Lower leg skin (tissue), 4 donors: ENCODE measurements at regions of chr4 and their contacts with region 1.

Region 1: DNA sequence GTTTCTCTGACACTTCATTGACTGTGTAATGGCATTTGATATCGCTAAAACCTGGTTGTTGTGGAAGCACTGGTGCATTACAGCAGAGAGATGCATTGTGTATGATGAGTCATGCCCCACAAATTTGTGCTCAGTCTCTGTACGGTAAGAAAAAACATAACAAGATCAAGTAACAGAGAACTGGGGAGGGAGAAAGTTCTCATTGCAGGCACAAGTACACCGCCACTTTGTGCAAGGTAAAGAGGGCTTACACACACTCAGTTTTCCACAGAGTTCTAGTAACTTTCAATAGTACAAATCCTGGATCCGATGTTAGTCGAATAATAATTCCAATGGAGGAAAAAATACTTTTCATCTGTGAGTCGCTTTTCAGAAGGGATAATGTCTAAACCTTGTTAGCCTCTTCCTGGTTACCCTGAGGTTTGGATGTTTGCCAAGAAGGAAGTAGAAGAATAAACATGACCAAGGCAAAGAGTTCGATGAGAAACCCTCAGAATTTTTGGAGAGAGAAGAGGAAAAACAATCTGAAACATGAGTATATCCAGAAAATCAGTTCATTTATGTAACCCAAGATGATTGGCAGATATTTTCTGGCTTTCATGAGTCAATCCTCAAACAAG is 512.5 kb upstream of the SLIT2 start:
- DNase-seq: no peak
- H3K4me3 ChIP-seq: no peak overlapping the region
- CTCF ChIP-seq: no peak
- POLR2A ChIP-seq: no peak

Region 2: DNA sequence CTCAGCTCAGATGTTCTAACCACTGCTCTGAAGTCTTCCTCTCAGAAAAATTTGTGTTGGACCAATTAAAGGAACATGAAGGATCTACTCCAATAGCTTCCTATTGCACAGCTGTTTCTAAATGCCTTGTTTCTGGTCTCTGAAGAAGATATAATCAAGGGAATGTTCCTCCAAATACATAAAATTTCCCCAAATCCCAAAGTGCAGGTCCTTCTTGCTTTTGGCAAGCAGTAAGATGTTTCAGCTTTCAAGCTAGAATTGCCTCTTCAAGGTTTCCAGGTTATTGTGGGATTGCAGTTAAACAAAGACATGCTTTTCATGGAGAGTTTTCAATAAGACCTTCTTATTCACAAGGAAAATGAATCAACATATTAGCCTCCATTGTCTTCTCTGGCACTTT is 62.0 kb before region 1 on chr4:
- intact Hi-C with region 1: loop called (anchors 2 kb)
- DNase-seq: no peak
- H3K4me3 ChIP-seq: no peak overlapping the region
- CTCF ChIP-seq: no peak
- POLR2A ChIP-seq: no peak